ENCODE measurements at regions of chr7 and their contacts with region 1.

Region 1: GRCh38 chr7:155804897-155805825 is 7.1 kb downstream of the SHH start:
- DNase-seq: peak; percentile 33
- H3K4me3 Mint-ChIP-seq: peak overlapping the region; percentile 59
- H3K27ac Mint-ChIP-seq: no peak overlapping the region
- H3K4me1 Mint-ChIP-seq: peaks cover 16% of the 10 kb centered on the region
- H3K27me3 Mint-ChIP-seq: peaks cover 48% of the 10 kb centered on the region

Region 2: GRCh38 chr7:155380221-155380861 is 424.8 kb before region 1 on chr7:
- intact Hi-C with region 1: loop called (anchors 2 kb)
- DNase-seq: peak; percentile 47
- H3K4me3 Mint-ChIP-seq: no peak overlapping the region
- H3K27ac Mint-ChIP-seq: peak overlapping the region; percentile 2
- H3K4me1 Mint-ChIP-seq: peaks cover 27% of the 10 kb centered on the region
- H3K27me3 Mint-ChIP-seq: peaks cover 69% of the 10 kb centered on the region

Region 3: DNA sequence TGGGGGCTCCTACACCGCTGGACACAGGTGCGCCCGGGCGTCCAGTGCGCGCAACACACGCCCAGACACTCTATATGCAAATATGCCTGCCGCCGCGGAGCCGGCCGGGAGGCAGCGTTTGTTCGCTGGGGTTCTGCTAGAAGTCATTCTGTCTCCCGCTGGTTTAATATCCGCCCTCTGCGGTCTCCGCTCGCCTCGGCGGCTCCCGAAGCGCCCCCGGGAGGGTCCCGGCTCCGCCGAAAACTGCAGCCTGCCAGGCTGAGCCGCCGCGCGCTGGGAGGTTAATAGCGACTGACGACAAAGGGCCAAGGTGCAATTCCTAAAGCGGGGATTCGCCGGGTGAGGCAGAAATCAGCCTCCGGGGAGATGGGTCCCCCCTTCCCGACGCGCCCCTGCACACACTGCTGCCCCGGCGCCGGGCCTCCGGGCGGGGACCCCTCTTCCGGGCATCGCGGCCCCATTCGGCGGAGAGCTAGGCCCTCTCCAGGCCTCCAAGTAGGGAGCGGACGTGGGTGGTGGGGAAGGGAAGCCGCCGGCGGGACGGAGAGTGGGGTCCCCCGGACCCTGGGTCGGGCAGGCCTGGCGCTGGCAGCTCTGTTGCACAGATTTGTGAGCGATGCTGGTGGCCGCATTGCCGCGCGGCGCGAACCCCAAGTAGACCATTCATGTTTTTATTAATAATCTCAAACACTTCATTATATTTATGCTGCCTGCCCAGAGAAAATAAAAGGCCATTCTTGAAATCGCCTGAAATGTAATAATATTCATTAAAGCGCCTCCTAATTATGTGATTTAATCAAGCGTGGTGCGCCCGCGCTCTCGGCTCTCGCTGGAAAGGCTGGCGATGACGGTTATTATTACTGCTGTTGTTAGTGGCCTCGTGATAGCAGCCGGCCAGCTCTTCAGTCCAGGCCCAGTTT is 338.1 kb before region 1 on chr7:
- intact Hi-C with region 1: loop called (anchors 2 kb)
- DNase-seq: peak; percentile 6
- H3K4me3 Mint-ChIP-seq: no peak overlapping the region
- H3K27ac Mint-ChIP-seq: peak overlapping the region; percentile 44
- H3K4me1 Mint-ChIP-seq: no peaks in the 10 kb centered on the region
- H3K27me3 Mint-ChIP-seq: peaks cover 87% of the 10 kb centered on the region

Region 4: GRCh38 chr7:155533827-155534690 is 271.1 kb before region 1 on chr7:
- intact Hi-C with region 1: loop called (anchors 2 kb)
- DNase-seq: no peak
- H3K4me3 Mint-ChIP-seq: no peak overlapping the region
- H3K27ac Mint-ChIP-seq: no peak overlapping the region
- H3K4me1 Mint-ChIP-seq: peaks cover 11% of the 10 kb centered on the region
- H3K27me3 Mint-ChIP-seq: peaks cover 61% of the 10 kb centered on the region

Region 5: GRCh38 chr7:156612930-156613329 is 807.8 kb after region 1 on chr7:
- intact Hi-C with region 1: loop called (anchors 10 kb)
- DNase-seq: peak; percentile 82
- H3K4me3 Mint-ChIP-seq: peak overlapping the region; percentile 63
- H3K27ac Mint-ChIP-seq: peak overlapping the region; percentile 25
- H3K4me1 Mint-ChIP-seq: peaks cover 37% of the 10 kb centered on the region
- H3K27me3 Mint-ChIP-seq: peaks cover 56% of the 10 kb centered on the region

Measured in activated T-helper 1 cell treated with anti-CD3 and anti-CD28 coated beads, Interleukin-12 subunit alpha, Interleukin-12 subunit beta, Interleukin-2, Interleukin-4 antibody, amounts not matched to agents 30 ng/mL and 10 ng/mL and 1 ng/mL, durations not matched to agents 14 hours and 24 hours and 36 hours (primary cell).